Left ventricle myocardium inferior (tissue), 1 donor: ENCODE measurements at regions of chr1 and their contacts with region 1.

Region 1: GRCh38 chr1:18902523-18903290 is at the start of gene ALDH4A1:
- DNase-seq: peak; percentile 98
- H3K4me3 ChIP-seq: peak within 1 kb of the TSS; percentile 96
- H3K27ac ChIP-seq: peak within 1 kb of the TSS; percentile 94
- H3K4me1 ChIP-seq: peaks cover 45% of the 10 kb centered on the region
- H3K27me3 ChIP-seq: no peaks in the 10 kb centered on the region
- CTCF ChIP-seq: no peak
- total RNA-seq, gene ALDH4A1: 35.9 TPM

Region 2: GRCh38 chr1:18956369-18957135 is 53.8 kb after region 1 on chr1 and contains the start of gene IFFO2:
- intact Hi-C with region 1: loop called (anchors 10 kb)
- DNase-seq: peak; percentile 98
- H3K4me3 ChIP-seq: peak within 1 kb of the TSS; percentile 86
- H3K27ac ChIP-seq: peak within 1 kb of the TSS; percentile 77
- H3K4me1 ChIP-seq: peaks cover 46% of the 10 kb centered on the region
- H3K27me3 ChIP-seq: no peaks in the 10 kb centered on the region
- CTCF ChIP-seq: no peak
- total RNA-seq, gene IFFO2: 3.3 TPM

Region 3: GRCh38 chr1:19096036-19096833 is 193.5 kb after region 1 on chr1:
- intact Hi-C with region 1: loop called (anchors 5 kb)
- DNase-seq: no peak
- H3K4me3 ChIP-seq: no peak overlapping the region
- H3K27ac ChIP-seq: peak overlapping the region; percentile 7
- H3K4me1 ChIP-seq: peaks cover 20% of the 10 kb centered on the region
- H3K27me3 ChIP-seq: no peaks in the 10 kb centered on the region
- CTCF ChIP-seq: peak; percentile 78